SK-N-SH (cell line): ENCODE measurements at regions of chr1 and their contacts with region 1.

Region 1: DNA sequence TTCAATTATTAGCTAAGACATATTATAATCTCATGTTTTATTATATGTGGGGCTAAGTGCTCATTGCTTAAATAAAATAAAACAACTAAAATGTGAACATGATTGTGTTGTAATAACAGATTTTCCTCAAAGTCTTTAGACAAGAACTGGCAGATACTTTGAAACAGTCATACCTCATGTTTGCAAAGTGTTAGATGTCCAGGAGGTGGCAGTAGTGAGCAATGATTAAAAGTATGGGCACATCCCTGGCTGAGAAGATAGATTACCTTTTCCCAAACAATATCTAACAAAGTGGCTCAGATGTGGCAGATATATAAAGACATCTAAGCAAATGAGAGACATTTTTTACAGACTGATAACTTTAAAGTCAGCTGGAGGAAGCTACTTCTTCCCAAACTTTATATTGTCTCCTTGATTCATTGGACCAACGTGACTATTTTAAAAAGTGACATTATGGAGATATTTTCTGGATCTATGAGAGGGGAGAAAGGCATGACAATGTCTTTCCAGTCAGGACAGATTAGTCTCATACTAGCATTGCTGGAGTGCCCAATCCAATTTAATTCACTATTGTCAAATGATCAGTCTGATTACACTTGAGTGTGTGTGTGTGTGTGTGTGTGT is 269.8 kb downstream of the S1PR1 start:
- DNase-seq: peak; percentile 33
- H3K4me3 ChIP-seq: no peak overlapping the region
- H3K27ac ChIP-seq: no peak overlapping the region
- H3K4me1 ChIP-seq: no peaks in the 10 kb centered on the region; a peak in 1 of 4 replicates
- H3K27me3 ChIP-seq: no peaks in the 10 kb centered on the region
- CTCF ChIP-seq: peak; percentile 82
- EP300 ChIP-seq: no peak
- RAD21 ChIP-seq: peak; percentile 61

Region 2: GRCh38 chr1:101264697-101265096 is 242.0 kb before region 1 on chr1:
- CTCF ChIA-PET with region 1: no interaction called
- POLR2A ChIA-PET with region 1: no interaction called
- DNase-seq: peak; percentile 15
- H3K4me3 ChIP-seq: no peak overlapping the region
- H3K27ac ChIP-seq: peak overlapping the region in 1 of 2 experiments; percentile 19; a peak in 1 of 4 replicates
- H3K4me1 ChIP-seq: peaks cover 5 to 12% of the 10 kb centered on the region in 2 experiments; a peak in 3 of 4 replicates
- H3K27me3 ChIP-seq: no peaks in the 10 kb centered on the region
- CTCF ChIP-seq: no peak
- EP300 ChIP-seq: no peak
- RAD21 ChIP-seq: no peak

Region 3: DNA sequence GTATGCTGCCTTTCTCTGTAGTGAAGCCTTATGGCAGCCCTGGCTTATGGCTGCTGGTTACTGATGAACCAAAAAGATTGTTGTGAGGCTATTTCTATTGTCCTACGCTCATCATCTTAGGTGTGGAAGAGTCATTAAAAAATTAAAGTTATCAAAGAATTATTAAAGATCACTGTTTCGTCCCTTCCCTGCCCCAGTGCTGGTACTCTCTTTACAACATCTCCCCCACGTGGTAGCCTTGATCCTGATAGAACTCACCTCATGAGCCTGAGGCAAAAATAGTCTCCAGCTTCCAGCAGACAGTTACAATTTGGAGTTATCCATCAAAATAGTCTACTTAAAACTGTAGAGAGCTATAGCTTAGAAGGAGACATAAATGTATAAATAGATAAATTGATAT is 68.3 kb before region 1 on chr1:
- CTCF ChIA-PET with region 1: no interaction called
- POLR2A ChIA-PET with region 1: no interaction called
- DNase-seq: no peak
- H3K4me3 ChIP-seq: no peak overlapping the region
- H3K27ac ChIP-seq: no peak overlapping the region
- H3K4me1 ChIP-seq: peaks cover 0 to 8% of the 10 kb centered on the region in 2 experiments; a peak in 2 of 4 replicates
- H3K27me3 ChIP-seq: no peaks in the 10 kb centered on the region
- CTCF ChIP-seq: peak; percentile 54
- EP300 ChIP-seq: no peak
- RAD21 ChIP-seq: peak; percentile 46

Region 4: GRCh38 chr1:101484689-101485338 is 21.8 kb before region 1 on chr1:
- CTCF ChIA-PET with region 1: interaction called, 19 read pairs
- POLR2A ChIA-PET with region 1: no interaction called
- DNase-seq: no peak
- H3K4me3 ChIP-seq: no peak overlapping the region
- H3K27ac ChIP-seq: peak overlapping the region; percentile 19 to 95; a peak in 3 of 4 replicates
- H3K4me1 ChIP-seq: peaks cover 0 to 24% of the 10 kb centered on the region in 2 experiments; a peak in 2 of 4 replicates
- H3K27me3 ChIP-seq: no peaks in the 10 kb centered on the region; the same call in 1 of the 2 replicates
- CTCF ChIP-seq: no peak
- EP300 ChIP-seq: no peak
- RAD21 ChIP-seq: no peak

Region 5: DNA sequence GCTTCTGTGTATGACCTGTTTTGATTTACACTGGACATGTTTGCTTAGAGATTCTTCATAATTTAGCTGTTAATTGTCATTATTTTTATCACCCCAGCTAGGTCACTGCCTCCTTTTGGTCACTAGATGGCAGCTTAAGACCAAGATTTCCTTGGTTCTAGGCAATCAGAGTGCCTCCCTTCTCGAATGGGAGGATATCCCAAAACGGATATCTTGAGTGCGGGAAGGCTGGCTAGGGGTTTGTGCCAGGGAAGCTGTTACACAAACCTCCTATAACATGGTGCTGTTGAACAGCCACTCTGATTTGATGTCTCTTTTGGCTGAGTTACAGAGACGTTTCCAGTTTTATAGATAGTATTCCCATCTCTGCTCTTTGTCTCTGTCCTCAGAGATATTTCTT is 13.6 kb after region 1 on chr1:
- CTCF ChIA-PET with region 1: interaction called, 13 read pairs
- POLR2A ChIA-PET with region 1: no interaction called
- DNase-seq: peak; percentile 42
- H3K4me3 ChIP-seq: peak overlapping the region in 1 of 2 experiments; percentile 38; a peak in 1 of 4 replicates
- H3K27ac ChIP-seq: no peak overlapping the region
- H3K4me1 ChIP-seq: no peaks in the 10 kb centered on the region
- H3K27me3 ChIP-seq: no peaks in the 10 kb centered on the region
- CTCF ChIP-seq: peak; percentile 86
- EP300 ChIP-seq: no peak
- RAD21 ChIP-seq: peak; percentile 84

Region 6: DNA sequence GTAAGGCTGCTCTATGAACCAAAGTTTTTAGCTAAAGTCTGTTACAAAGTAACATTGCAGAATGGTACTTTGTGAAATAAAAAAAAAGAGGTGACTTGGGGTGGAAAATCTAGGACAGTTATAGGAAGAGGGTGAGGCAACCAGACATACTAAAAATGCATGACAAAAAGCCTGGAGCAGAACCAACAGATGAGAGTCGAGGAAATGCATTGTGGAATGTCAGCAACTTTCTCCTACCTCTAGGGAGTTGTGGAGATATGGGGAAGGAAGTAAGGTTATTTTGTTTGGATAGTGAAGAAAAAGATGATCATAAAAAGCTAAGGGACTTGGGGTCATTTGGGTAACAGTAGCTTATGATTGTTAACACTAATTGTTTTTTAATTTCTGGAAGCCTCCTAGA is 25.7 kb after region 1 on chr1:
- CTCF ChIA-PET with region 1: no interaction called
- POLR2A ChIA-PET with region 1: no interaction called
- DNase-seq: no peak
- H3K4me3 ChIP-seq: no peak overlapping the region
- H3K27ac ChIP-seq: no peak overlapping the region
- H3K4me1 ChIP-seq: no peaks in the 10 kb centered on the region; a peak in 1 of 4 replicates
- H3K27me3 ChIP-seq: no peaks in the 10 kb centered on the region
- CTCF ChIP-seq: no peak
- EP300 ChIP-seq: no peak
- RAD21 ChIP-seq: no peak

Region 7: GRCh38 chr1:101781201-101781831 is 274.7 kb after region 1 on chr1:
- CTCF ChIA-PET with region 1: no interaction called
- POLR2A ChIA-PET with region 1: no interaction called
- DNase-seq: peak; percentile 3
- H3K4me3 ChIP-seq: no peak overlapping the region
- H3K27ac ChIP-seq: peak overlapping the region in 1 of 2 experiments; percentile 39; a peak in 2 of 4 replicates
- H3K4me1 ChIP-seq: peaks cover 0 to 5% of the 10 kb centered on the region in 2 experiments; a peak in 2 of 4 replicates
- H3K27me3 ChIP-seq: no peaks in the 10 kb centered on the region
- CTCF ChIP-seq: no peak
- EP300 ChIP-seq: no peak
- RAD21 ChIP-seq: no peak